ENCODE measurements at regions of chr3 and their contacts with region 1.

Region 1: GRCh38 chr3:184362668-184363540 is 1.4 kb downstream of the POLR2H start:
- DNase-seq: peak; percentile 81 to 98 (median 93)
- ATAC-seq: peak; percentile 71
- H3K4me3 ChIP-seq: peak overlapping the region; percentile 62 to 93
- H3K4me3 Mint-ChIP-seq: peak overlapping the region; percentile 98
- H3K27ac ChIP-seq: peak overlapping the region; percentile 74 to 87
- H3K27ac Mint-ChIP-seq: peak overlapping the region; percentile 93
- H3K4me1 ChIP-seq: peaks cover 15% of the 10 kb centered on the region
- H3K4me1 Mint-ChIP-seq: peaks cover 30% of the 10 kb centered on the region
- H3K27me3 ChIP-seq: no peaks in the 10 kb centered on the region
- H3K27me3 Mint-ChIP-seq: no peaks in the 10 kb centered on the region
- CTCF ChIP-seq: peak; percentile 13

Region 2: GRCh38 chr3:184017672-184018423 is 345.1 kb before region 1 on chr3 and contains the start of gene ABCC5:
- CTCF ChIA-PET with region 1: no interaction called
- POLR2A ChIA-PET with region 1: no interaction called
- intact Hi-C with region 1: loop called in 1 of 2 experiments (anchors 5 kb)
- DNase-seq: peak; percentile 60 to 91 (median 80)
- ATAC-seq: peak; percentile 94
- H3K4me3 ChIP-seq: peak within 1 kb of the TSS; percentile 94 to 98
- H3K4me3 Mint-ChIP-seq: peak within 1 kb of the TSS; percentile 99
- H3K27ac ChIP-seq: peak within 1 kb of the TSS; percentile 51 to 56
- H3K27ac Mint-ChIP-seq: peak within 1 kb of the TSS; percentile 83
- H3K4me1 ChIP-seq: peaks cover 11% of the 10 kb centered on the region
- H3K4me1 Mint-ChIP-seq: peaks cover 32% of the 10 kb centered on the region
- H3K27me3 ChIP-seq: no peaks in the 10 kb centered on the region
- H3K27me3 Mint-ChIP-seq: peaks cover 12% of the 10 kb centered on the region
- CTCF ChIP-seq: peak; percentile 76
- total RNA-seq, gene ABCC5: 7.4 to 8.3 TPM

Region 3: GRCh38 chr3:184185461-184186308 is 177.2 kb before region 1 on chr3 and contains the start of gene ABCF3:
- CTCF ChIA-PET with region 1: no interaction called
- POLR2A ChIA-PET with region 1: no interaction called
- intact Hi-C with region 1: loop called in 1 of 2 experiments (anchors 2 kb)
- DNase-seq: peak; percentile 98 to 100 (median 99)
- ATAC-seq: peak; percentile 97
- H3K4me3 ChIP-seq: peak within 1 kb of the TSS; percentile 95 to 98
- H3K4me3 Mint-ChIP-seq: peak within 1 kb of the TSS; percentile 98
- H3K27ac ChIP-seq: peak within 1 kb of the TSS; percentile 82 to 83
- H3K27ac Mint-ChIP-seq: peak within 1 kb of the TSS; percentile 96
- H3K4me1 ChIP-seq: peaks cover 26% of the 10 kb centered on the region
- H3K4me1 Mint-ChIP-seq: peaks cover 42% of the 10 kb centered on the region
- H3K27me3 ChIP-seq: no peaks in the 10 kb centered on the region
- H3K27me3 Mint-ChIP-seq: no peaks in the 10 kb centered on the region
- CTCF ChIP-seq: no peak
- total RNA-seq, gene ABCF3: 192 to 193 TPM

Region 4: GRCh38 chr3:184298759-184299496 is 64.0 kb before region 1 on chr3 and contains the start of gene PSMD2:
- CTCF ChIA-PET with region 1: no interaction called
- POLR2A ChIA-PET with region 1: no interaction called
- intact Hi-C with region 1: loop called (anchors 1 kb)
- DNase-seq: peak; percentile 96 to 99 (median 98)
- ATAC-seq: peak; percentile 93
- H3K4me3 ChIP-seq: peak within 1 kb of the TSS; percentile 74 to 89
- H3K4me3 Mint-ChIP-seq: peak within 1 kb of the TSS; percentile 93
- H3K27ac ChIP-seq: peak within 1 kb of the TSS; percentile 64 to 70
- H3K27ac Mint-ChIP-seq: peak within 1 kb of the TSS; percentile 91
- H3K4me1 ChIP-seq: peaks cover 10% of the 10 kb centered on the region
- H3K4me1 Mint-ChIP-seq: peaks cover 32% of the 10 kb centered on the region
- H3K27me3 ChIP-seq: no peaks in the 10 kb centered on the region
- H3K27me3 Mint-ChIP-seq: no peaks in the 10 kb centered on the region
- CTCF ChIP-seq: no peak
- total RNA-seq, gene PSMD2: 168 to 174 TPM

Region 5: GRCh38 chr3:184335661-184336546 is 27.0 kb before region 1 on chr3:
- CTCF ChIA-PET with region 1: no interaction called
- POLR2A ChIA-PET with region 1: interaction called, 5 read pairs
- intact Hi-C with region 1: loop called (anchors 1 kb)
- DNase-seq: peak; percentile 78 to 94 (median 86)
- ATAC-seq: peak; percentile 72
- H3K4me3 ChIP-seq: peak overlapping the region; percentile 50 to 63
- H3K4me3 Mint-ChIP-seq: peak overlapping the region; percentile 90
- H3K27ac ChIP-seq: peak overlapping the region; percentile 81 to 97
- H3K27ac Mint-ChIP-seq: peak overlapping the region; percentile 96
- H3K4me1 ChIP-seq: peaks cover 16% of the 10 kb centered on the region
- H3K4me1 Mint-ChIP-seq: peaks cover 25% of the 10 kb centered on the region
- H3K27me3 ChIP-seq: no peaks in the 10 kb centered on the region
- H3K27me3 Mint-ChIP-seq: no peaks in the 10 kb centered on the region
- CTCF ChIP-seq: no peak

Measured in CD8-positive, alpha-beta T cell (primary cell).